ENCODE measurements at regions of chr1 and their contacts with region 1.

Region 1: DNA sequence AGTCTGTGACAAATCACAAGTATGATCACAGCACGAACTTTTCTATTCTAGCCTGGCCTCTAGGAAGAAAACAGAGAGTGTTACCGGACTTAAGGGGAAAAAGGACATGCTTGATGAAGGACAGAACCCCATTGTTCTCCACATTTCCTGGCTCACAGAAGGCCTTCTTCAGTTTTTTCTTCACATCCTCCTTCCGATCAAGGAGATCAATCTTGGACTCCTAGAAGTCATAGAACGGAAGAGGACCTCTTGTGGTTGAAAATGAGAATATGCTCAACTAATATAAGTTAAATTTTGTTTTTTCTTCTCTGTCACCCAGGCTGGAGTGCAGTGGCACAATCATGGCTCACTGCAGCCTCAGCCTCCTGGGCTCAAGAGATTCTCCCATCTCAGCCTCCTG is 30.3 kb downstream of the YARS1 start:
- DNase-seq: no peak
- H3K4me3 ChIP-seq: no peak overlapping the region
- H3K27ac ChIP-seq: peak overlapping the region; percentile 57 to 72
- H3K4me1 ChIP-seq: peaks cover 7% of the 10 kb centered on the region
- H3K27me3 ChIP-seq: no peaks in the 10 kb centered on the region
- CTCF ChIP-seq: peak; percentile 34 to 53 (median 48)
- POLR2A ChIP-seq: no peak

Region 2: GRCh38 chr1:32876341-32877210 is 89.7 kb after region 1 on chr1:
- intact Hi-C with region 1: loop called (anchors 10 kb)
- DNase-seq: peak; percentile 83
- H3K4me3 ChIP-seq: no peak overlapping the region
- H3K27ac ChIP-seq: no peak overlapping the region
- H3K4me1 ChIP-seq: peaks cover 28% of the 10 kb centered on the region
- H3K27me3 ChIP-seq: no peaks in the 10 kb centered on the region
- CTCF ChIP-seq: peak; percentile 83 to 90 (median 85)
- POLR2A ChIP-seq: no peak